ENCODE measurements at regions of chr18 and their contacts with region 1.

Region 1: DNA sequence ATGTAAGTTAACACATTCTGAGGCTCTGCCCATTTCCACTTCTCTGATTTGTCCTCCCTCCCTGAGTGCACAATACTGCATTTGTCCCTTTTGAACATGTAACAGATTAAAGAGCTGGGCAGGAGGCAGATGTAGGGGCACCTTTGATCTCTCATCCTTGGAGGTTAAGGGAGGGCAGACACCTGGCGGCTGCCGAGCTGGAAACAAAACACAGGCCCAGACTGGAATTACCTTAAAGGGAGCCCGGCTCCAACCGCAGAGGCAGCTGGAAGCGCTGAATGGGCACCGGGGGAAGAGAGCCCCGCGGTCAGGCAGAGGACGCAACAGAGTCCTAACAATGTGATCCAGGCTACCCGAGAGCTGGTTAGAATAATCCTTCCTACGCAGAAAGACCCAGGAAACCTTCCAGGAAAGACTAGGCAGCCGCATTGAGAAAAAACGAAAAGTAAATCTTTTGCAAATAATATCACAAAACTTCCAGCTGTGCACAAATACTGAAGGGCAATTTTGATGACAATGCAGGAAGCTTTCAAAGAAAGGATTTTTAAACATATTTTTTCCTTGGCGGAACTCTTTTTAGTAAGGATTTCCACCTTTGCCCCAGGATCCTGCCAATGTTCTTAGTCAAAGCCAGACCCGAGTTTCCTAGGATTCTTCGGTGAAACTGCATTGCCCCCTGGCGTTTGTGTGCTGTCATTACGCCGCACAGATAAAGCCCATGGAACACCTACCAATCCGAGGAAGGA is 216.0 kb downstream of the TGIF1 start:
- DNase-seq: peak; percentile 80
- ATAC-seq: peak; percentile 88
- H3K4me3 ChIP-seq: no peak overlapping the region
- H3K4me3 Mint-ChIP-seq: peak overlapping the region; percentile 69
- H3K27ac ChIP-seq: no peak overlapping the region
- H3K27ac Mint-ChIP-seq: no peak overlapping the region
- H3K4me1 ChIP-seq: peaks cover 9 to 12% of the 10 kb centered on the region in 2 donors
- H3K4me1 Mint-ChIP-seq: peaks cover 16% of the 10 kb centered on the region
- H3K27me3 ChIP-seq: no peaks in the 10 kb centered on the region
- H3K27me3 Mint-ChIP-seq: no peaks in the 10 kb centered on the region
- CTCF ChIP-seq: peak; percentile 97

Region 2: GRCh38 chr18:2994603-2995432 is 671.1 kb before region 1 on chr18:
- CTCF ChIA-PET with region 1: interaction called, 20 read pairs
- POLR2A ChIA-PET with region 1: no interaction called
- intact Hi-C with region 1: loop called (anchors 5 kb)
- DNase-seq: peak; percentile 81
- ATAC-seq: peak; percentile 95
- H3K4me3 ChIP-seq: peak overlapping the region in 3 of 5 experiments; percentile 12 to 38 (median 21)
- H3K4me3 Mint-ChIP-seq: peak overlapping the region; percentile 50
- H3K27ac ChIP-seq: peak overlapping the region in 1 of 2 donors; percentile 4
- H3K27ac Mint-ChIP-seq: peak overlapping the region; percentile 29
- H3K4me1 ChIP-seq: peaks cover 9 to 14% of the 10 kb centered on the region in 2 donors
- H3K4me1 Mint-ChIP-seq: peaks cover 35% of the 10 kb centered on the region
- H3K27me3 ChIP-seq: no peaks in the 10 kb centered on the region
- H3K27me3 Mint-ChIP-seq: no peaks in the 10 kb centered on the region
- CTCF ChIP-seq: peak; percentile 68

Region 3: DNA sequence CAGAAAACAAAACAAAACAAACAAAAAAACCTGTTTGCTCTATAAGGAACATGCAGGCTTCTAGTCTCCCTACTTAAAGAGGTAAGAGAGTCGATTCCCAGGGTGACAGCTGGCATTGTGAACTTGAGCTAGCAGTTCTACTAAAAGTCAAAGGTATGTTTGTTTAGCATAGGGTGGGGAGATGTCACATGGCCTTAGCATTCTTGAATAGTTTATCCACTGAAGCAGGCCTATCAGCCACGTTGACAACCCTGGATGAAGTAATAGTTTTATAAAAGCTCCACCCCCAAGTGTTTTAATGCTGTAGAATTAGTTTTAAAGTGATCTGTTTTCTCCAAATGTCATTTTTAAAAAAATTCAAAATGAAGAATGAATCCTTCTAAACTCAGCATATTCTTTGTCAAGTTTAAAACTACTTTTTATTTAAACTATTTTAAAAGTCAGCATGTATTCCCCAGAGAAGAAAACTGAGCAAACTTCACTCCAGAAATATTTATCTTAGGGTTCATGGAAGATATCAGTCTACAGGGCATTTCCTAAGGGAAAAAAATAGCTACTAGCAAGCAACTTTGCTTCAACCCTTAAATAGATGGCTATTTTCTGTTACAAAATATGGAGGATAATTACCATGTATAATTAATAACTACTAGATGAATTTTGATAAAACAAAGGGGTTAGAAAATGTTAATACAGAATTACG is 447.9 kb before region 1 on chr18:
- CTCF ChIA-PET with region 1: no interaction called
- POLR2A ChIA-PET with region 1: no interaction called
- intact Hi-C with region 1: no loop called
- DNase-seq: no peak
- ATAC-seq: no peak
- H3K4me3 ChIP-seq: no peak overlapping the region
- H3K4me3 Mint-ChIP-seq: no peak overlapping the region
- H3K27ac ChIP-seq: no peak overlapping the region
- H3K27ac Mint-ChIP-seq: no peak overlapping the region
- H3K4me1 ChIP-seq: no peaks in the 10 kb centered on the region
- H3K4me1 Mint-ChIP-seq: no peaks in the 10 kb centered on the region
- H3K27me3 ChIP-seq: no peaks in the 10 kb centered on the region
- H3K27me3 Mint-ChIP-seq: no peaks in the 10 kb centered on the region
- CTCF ChIP-seq: no peak

Region 4: DNA sequence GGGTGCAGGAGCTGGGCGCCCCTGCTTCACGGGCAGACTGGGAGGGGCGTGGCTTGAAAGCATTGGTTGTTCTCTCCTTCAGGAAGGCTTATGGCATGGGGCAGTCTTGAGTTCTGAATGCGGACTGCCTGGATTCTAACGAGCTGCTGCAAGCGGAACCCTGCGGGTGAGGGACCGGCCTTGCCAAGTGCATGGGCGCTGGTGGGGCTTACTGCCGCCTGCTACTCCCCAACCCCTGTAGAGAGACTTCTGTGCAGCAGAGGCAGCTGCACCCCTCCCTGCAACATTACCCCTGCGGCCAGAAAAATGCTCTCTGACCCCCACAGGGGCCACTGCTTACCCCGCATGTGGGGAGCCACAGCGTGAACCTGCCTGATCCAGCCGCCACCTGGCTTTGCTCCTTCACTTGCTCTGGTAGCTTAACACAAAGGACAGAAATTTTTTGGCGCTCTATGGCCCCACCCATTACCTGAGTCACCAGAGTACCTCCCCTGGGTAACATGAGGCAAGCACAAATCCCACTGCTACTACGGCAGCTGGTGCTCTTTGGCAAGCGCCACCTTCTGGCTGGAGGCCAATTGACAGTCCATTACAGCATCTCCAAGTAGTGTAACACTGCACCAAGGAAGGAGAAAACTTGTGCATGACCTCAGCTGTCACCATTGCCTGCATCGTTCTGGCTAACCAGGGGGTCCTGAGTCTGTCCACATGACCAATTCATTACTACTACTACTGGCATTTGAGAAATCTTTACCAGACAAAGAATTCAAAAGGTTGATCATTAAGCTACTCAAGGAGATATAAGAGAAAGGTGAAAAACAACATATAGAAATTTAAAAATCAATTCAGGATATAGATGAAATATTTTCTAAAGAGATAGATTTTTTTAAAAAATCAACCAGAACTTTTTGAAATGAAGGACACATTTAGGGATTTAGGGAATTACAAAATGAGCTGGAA is 368.6 kb before region 1 on chr18:
- CTCF ChIA-PET with region 1: interaction called, 63 read pairs
- POLR2A ChIA-PET with region 1: interaction called, 3 read pairs
- intact Hi-C with region 1: no loop called
- DNase-seq: peak; percentile 90
- ATAC-seq: peak; percentile 99
- H3K4me3 ChIP-seq: peak overlapping the region; percentile 53 to 88 (median 85)
- H3K4me3 Mint-ChIP-seq: peak overlapping the region; percentile 96
- H3K27ac ChIP-seq: no peak overlapping the region
- H3K27ac Mint-ChIP-seq: peak overlapping the region; percentile 80
- H3K4me1 ChIP-seq: peaks cover 7 to 10% of the 10 kb centered on the region in 2 donors
- H3K4me1 Mint-ChIP-seq: peaks cover 13% of the 10 kb centered on the region
- H3K27me3 ChIP-seq: peaks cover 0 to 7% (median 2%) of the 10 kb centered on the region in 4 experiments
- H3K27me3 Mint-ChIP-seq: peaks cover 30% of the 10 kb centered on the region
- CTCF ChIP-seq: peak; percentile 89

Region 5: DNA sequence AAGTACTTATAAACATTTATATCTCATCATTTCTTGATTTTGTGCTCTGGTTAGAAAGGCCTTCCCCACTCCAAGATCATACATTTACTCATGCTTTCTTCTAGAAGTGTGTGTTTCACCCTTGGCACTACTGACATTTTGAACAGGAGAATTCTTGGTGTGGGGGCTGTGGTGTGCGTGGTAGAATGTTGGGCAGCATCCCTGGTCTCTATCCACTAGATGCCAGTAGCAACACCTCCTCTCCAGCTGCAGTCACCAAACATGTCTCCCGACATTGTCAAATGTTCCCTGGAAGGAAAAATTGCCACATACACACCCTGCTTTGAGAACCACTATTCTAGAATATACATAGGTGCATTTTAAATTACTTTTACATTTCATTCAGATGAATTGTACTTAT is 224.7 kb before region 1 on chr18:
- CTCF ChIA-PET with region 1: interaction called, 32 read pairs
- POLR2A ChIA-PET with region 1: no interaction called
- intact Hi-C with region 1: loop called (anchors 1 kb)
- DNase-seq: peak; percentile 43
- ATAC-seq: peak; percentile 54
- H3K4me3 ChIP-seq: no peak overlapping the region
- H3K4me3 Mint-ChIP-seq: no peak overlapping the region
- H3K27ac ChIP-seq: no peak overlapping the region
- H3K27ac Mint-ChIP-seq: no peak overlapping the region
- H3K4me1 ChIP-seq: no peaks in the 10 kb centered on the region
- H3K4me1 Mint-ChIP-seq: peaks cover 2% of the 10 kb centered on the region
- H3K27me3 ChIP-seq: no peaks in the 10 kb centered on the region
- H3K27me3 Mint-ChIP-seq: no peaks in the 10 kb centered on the region
- CTCF ChIP-seq: no peak

Region 6: DNA sequence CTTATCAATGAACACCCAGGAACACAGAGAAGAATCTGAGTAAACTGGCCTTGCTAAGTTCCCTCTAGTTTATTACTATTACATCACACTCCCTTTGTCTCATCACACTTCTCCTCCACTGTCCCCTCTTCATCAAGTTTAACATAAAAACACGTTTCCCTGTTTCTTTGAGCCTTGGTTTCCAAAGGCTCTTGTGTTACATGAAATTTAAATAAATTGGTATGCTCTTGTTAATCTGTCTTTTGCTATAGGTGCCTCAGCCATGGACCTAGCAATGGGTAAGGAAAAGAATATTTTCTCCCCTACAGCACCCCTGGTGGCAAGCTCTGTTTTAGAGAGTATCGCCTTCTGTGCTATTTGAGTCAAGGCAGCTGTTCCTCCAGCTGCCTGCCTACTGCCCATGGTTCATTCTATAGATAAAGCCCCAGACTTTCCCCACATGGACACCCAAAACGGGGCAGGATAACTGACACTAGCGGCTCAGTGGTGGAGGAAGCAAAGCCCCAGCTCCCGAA is 184.2 kb before region 1 on chr18:
- CTCF ChIA-PET with region 1: interaction called, 14 read pairs
- POLR2A ChIA-PET with region 1: no interaction called
- intact Hi-C with region 1: no loop called
- DNase-seq: peak; percentile 36
- ATAC-seq: peak; percentile 62
- H3K4me3 ChIP-seq: no peak overlapping the region
- H3K4me3 Mint-ChIP-seq: no peak overlapping the region
- H3K27ac ChIP-seq: no peak overlapping the region
- H3K27ac Mint-ChIP-seq: peak overlapping the region; percentile 17
- H3K4me1 ChIP-seq: no peaks in the 10 kb centered on the region
- H3K4me1 Mint-ChIP-seq: no peaks in the 10 kb centered on the region
- H3K27me3 ChIP-seq: no peaks in the 10 kb centered on the region
- H3K27me3 Mint-ChIP-seq: no peaks in the 10 kb centered on the region
- CTCF ChIP-seq: peak; percentile 44

Region 7: GRCh38 chr18:3604498-3605408 is 61.2 kb before region 1 on chr18:
- CTCF ChIA-PET with region 1: interaction called, 21 read pairs
- POLR2A ChIA-PET with region 1: no interaction called
- intact Hi-C with region 1: no loop called
- DNase-seq: peak; percentile 52
- ATAC-seq: peak; percentile 68
- H3K4me3 ChIP-seq: peak overlapping the region; percentile 4 to 81 (median 53)
- H3K4me3 Mint-ChIP-seq: no peak overlapping the region
- H3K27ac ChIP-seq: peak overlapping the region; percentile 16 to 21
- H3K27ac Mint-ChIP-seq: no peak overlapping the region
- H3K4me1 ChIP-seq: peaks cover 36 to 38% of the 10 kb centered on the region in 2 donors
- H3K4me1 Mint-ChIP-seq: peaks cover 5% of the 10 kb centered on the region
- H3K27me3 ChIP-seq: no peaks in the 10 kb centered on the region
- H3K27me3 Mint-ChIP-seq: no peaks in the 10 kb centered on the region
- CTCF ChIP-seq: no peak

Region 8: DNA sequence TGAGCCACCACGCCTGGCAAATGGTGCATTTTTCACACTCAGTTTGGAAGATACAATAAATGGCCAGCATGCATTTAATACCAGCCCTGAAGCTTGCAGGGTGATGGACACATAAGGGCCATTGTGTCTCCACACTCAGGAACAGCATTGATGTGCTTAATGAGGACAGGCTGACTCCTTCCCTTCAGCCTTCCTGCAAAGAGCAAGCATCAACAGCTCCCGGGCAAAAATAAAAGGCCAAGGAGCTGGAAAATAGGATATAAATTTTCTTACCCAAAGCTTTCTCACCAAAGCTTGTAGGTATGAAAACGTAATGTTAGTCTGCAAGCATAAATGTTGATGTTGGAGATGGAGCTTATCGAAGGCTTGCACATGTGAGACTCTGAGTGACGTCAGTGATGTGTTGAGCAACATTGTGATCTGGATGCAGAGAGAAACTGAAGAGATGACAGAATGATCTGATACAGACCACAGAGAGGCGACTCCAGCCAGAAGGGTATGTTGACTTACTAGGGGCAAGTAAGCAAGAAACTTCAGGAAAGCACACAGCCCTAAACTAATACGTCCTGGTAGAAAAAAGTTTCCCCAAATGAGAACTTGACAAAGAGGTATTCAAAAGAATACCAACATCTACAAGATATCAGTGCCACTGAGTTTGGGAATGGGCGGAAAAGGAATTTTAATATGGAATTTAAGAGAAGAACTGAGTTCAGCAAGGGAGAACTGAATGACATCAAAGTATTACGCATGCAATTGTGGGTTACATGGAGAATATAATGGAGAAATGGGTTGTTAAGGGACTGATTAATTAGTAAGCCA is 40.5 kb after region 1 on chr18:
- CTCF ChIA-PET with region 1: no interaction called
- POLR2A ChIA-PET with region 1: no interaction called
- intact Hi-C with region 1: no loop called
- DNase-seq: no peak
- ATAC-seq: no peak
- H3K4me3 ChIP-seq: no peak overlapping the region
- H3K4me3 Mint-ChIP-seq: no peak overlapping the region
- H3K27ac ChIP-seq: no peak overlapping the region
- H3K27ac Mint-ChIP-seq: no peak overlapping the region
- H3K4me1 ChIP-seq: no peaks in the 10 kb centered on the region
- H3K4me1 Mint-ChIP-seq: peaks cover 2% of the 10 kb centered on the region
- H3K27me3 ChIP-seq: peaks cover 0 to 3% (median 0%) of the 10 kb centered on the region in 4 experiments
- H3K27me3 Mint-ChIP-seq: peaks cover 49% of the 10 kb centered on the region
- CTCF ChIP-seq: no peak

Measured in B cell (primary cell).